OCI-LY7 (cell line): ENCODE measurements at regions of chr1 and their contacts with region 1.

Region 1: DNA sequence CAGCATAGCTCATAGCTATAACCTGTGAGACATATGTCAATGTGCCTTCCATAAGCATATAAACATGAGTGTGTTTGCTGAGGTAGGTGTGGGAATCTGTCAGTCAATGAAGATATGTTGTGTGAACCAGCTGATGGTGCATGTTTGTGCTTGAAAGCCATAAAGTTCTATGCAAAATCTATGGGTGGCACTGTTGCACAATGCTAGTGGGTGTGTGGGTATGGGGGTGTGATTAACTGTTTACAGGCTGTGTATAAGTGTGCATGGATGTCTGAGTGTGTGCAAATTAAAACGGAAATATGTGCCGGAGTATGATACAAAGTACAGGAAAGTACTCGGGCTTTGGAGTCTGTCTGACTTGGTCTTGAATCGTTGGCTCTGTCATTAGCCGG is 1.0 kb upstream of the ATP2B4 start:
- DNase-seq: peak; percentile 77
- H3K4me3 ChIP-seq: peak overlapping the region; percentile 74
- H3K27ac ChIP-seq: peak overlapping the region; percentile 78
- H3K4me1 ChIP-seq: peaks cover 48% of the 10 kb centered on the region
- CTCF ChIP-seq: peak; percentile 78

Region 2: DNA sequence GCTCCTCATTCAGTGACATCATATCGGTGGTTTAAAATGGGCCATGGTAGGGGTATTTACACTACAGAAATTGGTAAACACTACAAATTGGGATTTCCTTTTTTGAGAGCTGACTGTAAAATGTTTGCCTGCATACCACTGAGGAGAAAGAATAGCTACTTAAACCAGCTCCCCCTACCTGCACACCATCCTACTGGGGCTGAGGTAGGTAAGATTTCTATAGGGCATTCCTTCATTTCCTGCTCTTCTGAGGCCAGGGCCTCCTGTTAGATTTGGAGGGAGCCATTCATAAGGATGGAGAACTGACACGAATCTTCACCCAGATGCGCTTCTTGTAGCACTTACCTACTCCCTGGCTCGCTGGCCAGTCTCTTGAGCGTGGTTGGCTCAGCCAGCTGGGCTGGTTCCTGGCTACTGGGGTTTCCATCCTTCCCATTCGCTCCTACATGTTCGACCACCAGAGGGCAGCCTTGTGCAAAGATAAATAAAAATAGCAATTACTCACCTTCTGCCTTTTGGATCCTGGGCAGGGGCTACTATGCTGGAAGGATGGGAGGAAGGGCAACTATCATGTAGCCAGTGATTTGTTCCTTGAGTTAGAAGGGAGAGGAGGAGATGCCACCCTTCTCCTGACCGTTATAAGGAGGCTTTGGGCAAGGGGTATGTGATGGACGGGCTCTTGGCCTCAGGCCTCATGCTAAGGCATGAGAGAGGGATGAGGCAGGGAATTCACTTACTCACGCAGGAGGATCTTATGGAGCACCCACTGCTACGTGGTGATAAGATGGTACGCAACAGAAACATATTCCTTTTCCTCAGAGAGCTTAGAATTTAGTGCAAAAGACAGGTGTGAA is 121.0 kb before region 1 on chr1:
- CTCF ChIA-PET with region 1: interaction called, 3 read pairs
- POLR2A ChIA-PET with region 1: interaction called, 4 read pairs
- intact Hi-C with region 1: loop called (anchors 5 kb)
- DNase-seq: peak; percentile 81
- H3K4me3 ChIP-seq: no peak overlapping the region
- H3K27ac ChIP-seq: no peak overlapping the region
- H3K4me1 ChIP-seq: no peaks in the 10 kb centered on the region
- CTCF ChIP-seq: peak; percentile 96

Region 3: DNA sequence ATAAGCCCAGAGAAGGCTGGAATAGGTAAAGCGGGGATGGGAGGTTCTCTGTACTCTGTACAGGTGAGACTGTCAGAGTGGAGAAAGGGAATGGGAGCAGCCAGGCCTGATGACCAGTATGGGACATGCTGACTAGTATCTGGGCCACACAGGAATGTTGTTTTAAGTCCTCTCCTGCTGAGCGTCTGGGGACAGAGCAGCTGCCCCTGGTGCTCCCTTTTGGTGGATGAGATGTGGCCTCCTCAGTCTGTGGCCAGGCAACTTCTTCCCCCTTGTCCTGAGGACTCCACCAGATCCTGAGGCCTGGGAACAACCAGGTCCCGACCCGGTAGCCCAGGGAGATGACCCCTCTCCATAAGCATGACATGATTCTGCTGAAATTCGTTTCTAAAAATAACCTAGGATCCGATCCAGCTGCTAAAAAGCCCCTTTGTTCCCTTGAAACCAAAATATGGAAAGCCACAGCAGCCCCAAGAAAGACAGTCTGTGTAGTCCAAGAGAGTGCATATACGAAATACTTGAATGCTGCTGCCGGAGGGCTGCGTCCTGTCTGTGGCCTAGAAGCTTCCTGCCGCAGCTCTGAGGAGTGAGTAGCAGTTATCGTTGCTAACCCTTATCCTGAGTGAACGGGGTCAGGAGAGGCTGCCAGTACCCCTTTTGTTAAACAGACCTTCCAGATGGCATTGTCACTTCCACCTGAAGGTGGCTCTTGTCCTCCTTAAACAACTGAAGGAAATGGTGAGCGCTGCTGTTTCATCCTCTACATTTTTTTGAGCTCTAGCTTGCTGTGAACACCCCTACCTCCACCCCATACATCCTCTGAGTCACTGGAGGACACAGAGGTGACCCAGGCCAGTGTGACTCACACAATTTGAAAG is 48.2 kb after region 1 on chr1:
- CTCF ChIA-PET with region 1: no interaction called
- POLR2A ChIA-PET with region 1: interaction called, 4 read pairs
- intact Hi-C with region 1: loop called (anchors 2 kb)
- DNase-seq: peak; percentile 71
- H3K4me3 ChIP-seq: no peak overlapping the region
- H3K27ac ChIP-seq: no peak overlapping the region
- H3K4me1 ChIP-seq: peaks cover 22% of the 10 kb centered on the region
- CTCF ChIP-seq: peak; percentile 70